ENCODE measurements at regions of chr15 and their contacts with region 1.

Region 1: GRCh38 chr15:55649054-55649423 is 60.9 kb upstream of the PYGO1 start:
- DNase-seq: no peak
- ATAC-seq: no peak
- H3K4me3 ChIP-seq: no peak overlapping the region
- H3K4me3 Mint-ChIP-seq: no peak overlapping the region
- H3K27ac ChIP-seq: no peak overlapping the region
- H3K27ac Mint-ChIP-seq: no peak overlapping the region
- H3K4me1 ChIP-seq: no peaks in the 10 kb centered on the region
- H3K4me1 Mint-ChIP-seq: no peaks in the 10 kb centered on the region
- H3K27me3 ChIP-seq: no peaks in the 10 kb centered on the region
- H3K27me3 Mint-ChIP-seq: peaks cover 0 to 2% of the 10 kb centered on the region in 2 donors
- CTCF ChIP-seq: no peak

Region 2: GRCh38 chr15:55846116-55846707 is 197.2 kb after region 1 on chr15:
- intact Hi-C with region 1: loop called (anchors 1 kb)
- DNase-seq: peak in 1 of 2 donors; percentile 80
- ATAC-seq: peak; percentile 70 to 86 (median 79)
- H3K4me3 ChIP-seq: no peak overlapping the region
- H3K4me3 Mint-ChIP-seq: no peak overlapping the region
- H3K27ac ChIP-seq: no peak overlapping the region
- H3K27ac Mint-ChIP-seq: no peak overlapping the region
- H3K4me1 ChIP-seq: no peaks in the 10 kb centered on the region
- H3K4me1 Mint-ChIP-seq: no peaks in the 10 kb centered on the region
- H3K27me3 ChIP-seq: no peaks in the 10 kb centered on the region
- H3K27me3 Mint-ChIP-seq: no peaks in the 10 kb centered on the region
- CTCF ChIP-seq: peak; percentile 93

Measured in natural killer cell (primary cell).